Activated naive CD4-positive, alpha-beta T cell treated with anti-CD3 and anti-CD28 coated beads for 36 hours (primary cell): ENCODE measurements at regions of chr6 and their contacts with region 1.

Region 1: DNA sequence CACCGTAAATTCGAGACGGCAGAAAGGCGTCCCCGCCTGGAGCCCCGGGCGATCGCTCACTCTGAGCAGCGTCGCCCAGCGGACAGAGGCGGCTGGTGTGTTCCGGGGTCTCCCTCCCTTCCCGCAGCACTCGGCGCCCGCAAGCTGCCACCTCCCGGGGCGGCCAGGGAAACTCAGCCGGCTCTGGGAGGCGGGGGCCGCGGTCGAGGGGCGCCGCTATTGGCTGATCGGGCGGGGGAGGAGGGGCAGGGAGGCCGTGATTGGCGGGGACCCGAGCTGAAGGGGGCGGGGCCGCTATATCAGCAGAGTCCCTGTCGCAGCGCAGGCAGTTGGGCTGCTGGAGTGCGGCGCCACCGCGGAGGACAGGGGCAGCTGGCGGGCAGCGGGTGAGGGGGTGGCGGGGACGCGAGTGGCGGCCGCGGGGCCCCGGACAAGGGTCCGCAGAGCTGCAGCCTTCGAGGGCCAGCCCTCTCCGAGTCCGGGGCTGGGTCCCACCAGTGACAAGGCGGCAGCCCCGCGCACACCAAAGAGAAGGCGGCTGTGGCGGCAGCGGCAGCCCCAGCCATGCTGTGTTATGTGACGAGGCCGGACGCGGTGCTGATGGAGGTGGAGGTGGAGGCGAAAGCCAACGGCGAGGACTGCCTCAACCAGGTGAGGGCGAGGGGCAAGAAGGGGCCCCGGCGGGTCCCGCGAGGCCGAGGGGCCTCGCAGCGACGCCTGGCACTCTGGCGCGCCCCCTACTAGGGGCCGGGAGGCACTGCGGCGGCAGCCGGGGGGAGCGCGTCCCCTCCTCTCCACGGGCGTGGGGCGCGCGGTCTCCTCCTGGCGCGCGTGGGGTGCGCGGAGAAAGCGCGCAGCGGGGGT is at the start of gene MYLIP:
- DNase-seq: peak; percentile 98
- H3K4me3 Mint-ChIP-seq: peak within 1 kb of the TSS; percentile 86
- H3K27ac Mint-ChIP-seq: peak within 1 kb of the TSS; percentile 92
- H3K4me1 Mint-ChIP-seq: peaks cover 30% of the 10 kb centered on the region
- H3K27me3 Mint-ChIP-seq: peaks cover 7% of the 10 kb centered on the region
- total RNA-seq, gene MYLIP: 7.3 to 8.1 TPM

Region 2: DNA sequence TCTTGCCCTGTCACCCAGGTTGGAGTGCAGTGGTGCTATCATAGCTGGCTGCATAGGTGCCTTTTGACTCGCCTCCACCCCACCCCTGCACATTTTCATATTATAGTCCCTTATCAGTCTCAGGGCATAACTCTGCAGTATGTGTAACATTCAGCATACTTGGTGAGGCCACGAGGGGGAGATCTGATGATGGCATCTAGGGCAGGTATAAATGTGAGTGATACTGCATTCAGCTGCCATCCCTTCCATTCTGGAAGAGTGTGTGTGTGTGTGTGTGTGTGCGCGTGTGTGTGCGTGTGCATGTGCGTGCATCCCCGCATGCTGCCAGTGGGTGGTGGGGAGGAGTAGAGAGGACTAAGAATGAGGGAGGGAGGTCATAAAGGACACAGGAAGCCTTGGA is 801.7 kb before region 1 on chr6:
- CTCF ChIA-PET with region 1: no interaction called
- intact Hi-C with region 1: loop called (anchors 10 kb)
- DNase-seq: peak; percentile 79
- H3K4me3 Mint-ChIP-seq: no peak overlapping the region
- H3K27ac Mint-ChIP-seq: peak overlapping the region; percentile 85
- H3K4me1 Mint-ChIP-seq: peaks cover 88% of the 10 kb centered on the region
- H3K27me3 Mint-ChIP-seq: no peaks in the 10 kb centered on the region

Region 3: DNA sequence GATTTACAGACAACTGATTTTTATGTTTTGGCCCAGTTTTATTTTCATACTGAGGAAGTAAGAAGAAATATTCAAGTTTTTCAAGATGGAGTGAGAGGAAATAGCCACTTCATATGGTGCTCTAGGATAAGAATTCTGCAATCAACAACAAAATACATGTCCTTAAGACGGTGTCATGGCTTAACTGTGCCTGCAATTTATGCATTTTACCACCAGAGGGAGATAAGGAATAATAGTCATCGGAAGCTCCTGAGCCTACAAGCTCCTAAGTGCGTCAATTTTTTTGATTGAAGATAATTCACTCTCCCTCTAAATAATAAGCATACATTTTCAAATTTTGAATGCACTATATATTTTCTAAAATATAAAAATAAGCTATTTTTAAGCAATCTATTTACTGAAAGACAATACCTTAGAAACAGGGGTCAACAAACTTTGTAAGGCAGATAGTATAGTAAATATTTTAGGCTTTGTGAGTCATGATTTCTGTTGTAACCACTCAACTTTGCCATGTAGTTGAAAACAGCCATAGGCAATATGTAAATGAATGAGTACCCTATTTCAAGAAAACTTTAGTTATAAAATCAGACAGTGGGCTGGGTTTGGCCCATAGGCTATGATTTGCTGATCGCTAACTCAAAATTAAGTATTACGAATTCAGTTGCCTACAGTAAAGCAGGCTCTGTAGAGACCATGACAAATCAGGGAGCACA is 235.3 kb before region 1 on chr6:
- CTCF ChIA-PET with region 1: interaction called, 6 read pairs
- intact Hi-C with region 1: loop called (anchors 1 kb)
- DNase-seq: no peak
- H3K4me3 Mint-ChIP-seq: no peak overlapping the region
- H3K27ac Mint-ChIP-seq: no peak overlapping the region
- H3K4me1 Mint-ChIP-seq: no peaks in the 10 kb centered on the region
- H3K27me3 Mint-ChIP-seq: peaks cover 2% of the 10 kb centered on the region

Region 4: GRCh38 chr6:16183187-16183664 is 54.2 kb after region 1 on chr6:
- CTCF ChIA-PET with region 1: interaction called, 39 read pairs
- intact Hi-C with region 1: loop called (anchors 1 kb)
- DNase-seq: no peak
- H3K4me3 Mint-ChIP-seq: no peak overlapping the region
- H3K27ac Mint-ChIP-seq: no peak overlapping the region
- H3K4me1 Mint-ChIP-seq: peaks cover 20% of the 10 kb centered on the region
- H3K27me3 Mint-ChIP-seq: no peaks in the 10 kb centered on the region

Region 5: DNA sequence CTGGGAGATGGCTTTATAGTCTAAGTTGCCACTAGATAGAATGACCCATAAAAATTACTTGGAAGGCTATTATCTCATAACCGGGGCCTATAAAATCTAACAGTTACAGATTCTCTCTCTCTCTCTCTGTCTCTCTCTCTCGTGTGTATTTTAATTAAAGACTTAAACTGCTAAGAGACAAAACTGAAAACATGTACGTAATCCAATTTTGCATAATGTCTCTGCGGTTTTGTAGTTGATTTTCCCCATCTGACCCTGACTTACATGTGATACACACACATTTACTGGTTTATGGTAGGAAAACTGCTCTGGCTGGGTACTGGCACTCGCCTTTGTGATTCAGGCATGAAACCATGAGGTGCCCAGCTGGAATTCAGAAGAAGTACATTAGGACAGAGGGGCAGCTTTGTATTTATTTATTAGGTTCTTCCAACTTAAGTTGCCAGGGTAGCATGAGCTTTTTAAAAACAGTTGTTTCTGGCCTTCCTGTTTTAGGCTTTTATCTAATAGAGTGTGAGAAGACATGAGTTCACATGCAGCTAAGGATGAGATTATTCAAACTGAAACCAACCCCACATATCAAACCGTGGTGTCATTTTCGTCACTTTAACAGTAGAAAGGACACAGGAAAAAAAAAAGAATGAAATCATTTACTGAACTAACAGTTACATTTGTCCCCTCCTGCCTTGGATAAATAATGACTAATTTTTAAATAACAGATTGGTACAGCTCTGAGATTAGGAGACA is 291.9 kb after region 1 on chr6:
- CTCF ChIA-PET with region 1: interaction called, 4 read pairs
- intact Hi-C with region 1: loop called (anchors 10 kb)
- DNase-seq: peak; percentile 66
- H3K4me3 Mint-ChIP-seq: peak overlapping the region; percentile 45
- H3K27ac Mint-ChIP-seq: peak overlapping the region; percentile 95
- H3K4me1 Mint-ChIP-seq: peaks cover 42% of the 10 kb centered on the region
- H3K27me3 Mint-ChIP-seq: no peaks in the 10 kb centered on the region

Region 6: DNA sequence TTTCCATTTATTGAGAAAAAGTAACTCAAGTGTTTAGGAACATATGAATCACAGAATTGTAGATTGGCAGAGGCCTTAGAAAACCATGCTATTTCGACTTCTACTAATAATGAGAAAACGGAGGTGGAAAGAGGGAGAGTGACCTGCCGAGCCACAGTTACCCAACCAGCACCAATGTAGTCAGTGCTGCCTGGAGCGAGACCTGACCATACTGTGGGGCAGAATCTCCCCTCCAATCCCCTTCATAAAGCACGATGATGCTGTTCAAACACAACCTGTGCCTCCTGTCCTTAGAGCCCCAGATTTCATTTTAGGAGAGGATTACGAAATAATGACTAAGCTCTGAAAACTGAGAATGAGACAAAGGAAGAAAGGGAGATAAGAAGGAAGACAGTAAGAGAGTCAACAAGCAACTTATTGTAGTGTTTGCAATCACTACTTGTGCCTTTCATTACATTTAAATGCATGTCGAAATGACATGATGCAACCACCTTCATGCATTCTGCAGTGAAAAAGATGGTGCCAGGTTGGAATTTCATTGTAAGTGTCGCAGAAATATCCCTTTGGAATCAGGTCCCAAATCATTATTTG is 561.7 kb after region 1 on chr6:
- CTCF ChIA-PET with region 1: no interaction called
- intact Hi-C with region 1: loop called (anchors 10 kb)
- DNase-seq: no peak
- H3K4me3 Mint-ChIP-seq: no peak overlapping the region
- H3K27ac Mint-ChIP-seq: peak overlapping the region; percentile 59
- H3K4me1 Mint-ChIP-seq: peaks cover 77% of the 10 kb centered on the region
- H3K27me3 Mint-ChIP-seq: no peaks in the 10 kb centered on the region